Left cardiac atrium (tissue), 4 donors: ENCODE measurements at regions of chr1 and their contacts with region 1.

Region 1: DNA sequence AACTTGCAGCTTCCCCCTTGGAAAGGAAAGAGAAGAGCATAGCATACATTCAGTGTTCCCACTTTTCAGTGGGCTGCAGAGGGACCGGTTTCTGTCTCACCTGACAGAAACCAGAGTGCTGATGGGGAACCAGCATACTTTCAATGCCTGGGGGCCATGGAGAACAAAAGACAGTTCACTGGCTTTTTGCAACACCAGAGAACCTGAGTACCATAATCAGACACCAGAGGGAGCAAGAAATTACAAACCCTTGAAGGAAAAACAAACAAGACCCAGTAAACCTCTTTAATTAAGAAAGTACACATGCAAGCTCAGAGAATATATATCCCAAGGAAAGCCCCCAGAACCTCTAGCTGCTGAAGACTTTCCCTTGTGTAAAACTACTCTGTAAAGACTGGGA is 51.1 kb downstream of the CSMD2 start:
- DNase-seq: no peak
- ATAC-seq: no peak

Region 2: DNA sequence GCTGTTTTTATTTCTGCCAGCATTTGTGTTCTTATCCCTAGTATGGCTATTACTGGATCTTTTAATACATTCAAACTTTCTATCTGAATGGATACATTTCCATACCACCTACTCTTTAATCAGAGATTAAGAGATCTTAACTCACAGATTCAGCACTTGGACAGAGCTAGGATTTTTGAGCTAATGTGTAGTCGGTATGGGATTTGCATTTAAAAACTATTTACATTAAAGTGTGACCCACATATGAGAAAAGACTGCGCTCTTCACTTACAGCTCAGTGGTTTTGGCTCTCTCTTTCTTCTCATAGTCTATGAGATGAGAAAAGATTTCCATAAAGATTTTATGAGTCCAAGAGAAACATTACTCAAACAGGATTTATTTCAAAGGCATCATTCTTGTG is 233.6 kb before region 1 on chr1:
- intact Hi-C with region 1: loop called in 1 of 2 experiments (anchors 5 kb)
- DNase-seq: no peak
- ATAC-seq: no peak

Region 3: DNA sequence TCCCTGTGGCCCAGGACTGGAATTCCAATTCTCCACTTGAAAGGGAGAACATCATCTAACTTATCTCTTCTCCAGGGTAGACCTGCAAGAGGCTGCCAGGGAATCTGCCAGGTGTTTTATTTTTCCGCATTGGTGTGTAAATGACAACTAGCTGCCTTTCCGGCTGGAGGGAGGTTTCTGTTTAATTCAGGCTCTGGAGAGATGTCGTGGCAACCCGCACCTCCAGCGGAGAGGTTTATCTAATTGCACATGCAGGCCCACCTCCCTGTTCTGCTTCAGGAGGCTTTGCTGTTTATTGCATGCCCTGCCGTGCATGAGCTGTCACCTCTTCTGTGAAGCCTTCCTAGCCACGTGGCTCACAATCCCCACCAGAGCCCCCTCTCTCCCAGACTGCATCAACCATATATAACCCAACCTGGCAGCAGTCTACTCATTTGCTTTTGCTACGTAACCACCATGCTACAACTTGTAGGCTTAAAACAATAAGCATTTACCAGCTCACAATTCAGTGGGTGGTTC is 214.5 kb after region 1 on chr1:
- intact Hi-C with region 1: no loop called
- DNase-seq: no peak
- ATAC-seq: no peak

Region 4: DNA sequence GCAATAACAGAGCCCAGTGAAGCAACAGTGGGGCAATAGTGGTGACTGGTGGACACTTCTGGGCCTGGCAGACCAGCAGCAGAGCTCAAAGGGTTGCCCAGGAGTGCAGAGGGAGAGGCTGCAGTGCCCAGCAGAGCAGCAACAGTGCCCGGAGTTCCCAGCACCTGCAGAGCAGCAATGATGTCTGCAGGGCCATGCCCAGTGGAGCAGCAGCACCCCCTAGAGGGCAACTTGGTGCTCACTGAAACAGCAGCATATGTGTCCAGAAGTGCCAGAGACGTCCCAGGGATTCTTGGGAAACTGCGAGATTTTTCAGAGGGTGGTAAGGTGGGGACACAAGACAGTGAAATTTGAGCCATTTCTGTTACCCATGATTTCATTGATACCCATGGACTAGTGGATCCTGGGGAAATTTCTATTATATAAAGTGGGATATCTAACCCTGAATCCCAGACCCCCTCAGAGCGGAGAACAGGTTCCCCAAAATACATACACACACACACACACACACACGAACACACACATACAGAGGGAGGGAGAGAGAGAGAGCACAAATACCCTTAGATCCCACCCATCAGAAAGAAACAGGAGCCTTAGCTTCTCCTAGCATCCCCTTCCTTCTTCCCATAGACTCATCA is 484.1 kb after region 1 on chr1:
- intact Hi-C with region 1: loop called in 1 of 2 experiments (anchors 5 kb)
- DNase-seq: peak; percentile 53
- ATAC-seq: peak; percentile 44 to 64